Gastrocnemius medialis (tissue), 4 donors: ENCODE measurements at regions of chr6 and their contacts with region 1.

Region 1: GRCh38 chr6:152338335-152339125 is 298.6 kb downstream of the SYNE1 start:
- DNase-seq: peak; percentile 19 to 51
- ATAC-seq: peak; percentile 49 to 57
- H3K4me3 ChIP-seq: no peak overlapping the region
- H3K27ac ChIP-seq: no peak overlapping the region
- H3K4me1 ChIP-seq: peaks cover 8 to 10% of the 10 kb centered on the region in 2 donors
- H3K27me3 ChIP-seq: no peaks in the 10 kb centered on the region
- CTCF ChIP-seq: peak; percentile 49 to 87 (median 77)
- POLR2A ChIP-seq: no peak

Region 2: DNA sequence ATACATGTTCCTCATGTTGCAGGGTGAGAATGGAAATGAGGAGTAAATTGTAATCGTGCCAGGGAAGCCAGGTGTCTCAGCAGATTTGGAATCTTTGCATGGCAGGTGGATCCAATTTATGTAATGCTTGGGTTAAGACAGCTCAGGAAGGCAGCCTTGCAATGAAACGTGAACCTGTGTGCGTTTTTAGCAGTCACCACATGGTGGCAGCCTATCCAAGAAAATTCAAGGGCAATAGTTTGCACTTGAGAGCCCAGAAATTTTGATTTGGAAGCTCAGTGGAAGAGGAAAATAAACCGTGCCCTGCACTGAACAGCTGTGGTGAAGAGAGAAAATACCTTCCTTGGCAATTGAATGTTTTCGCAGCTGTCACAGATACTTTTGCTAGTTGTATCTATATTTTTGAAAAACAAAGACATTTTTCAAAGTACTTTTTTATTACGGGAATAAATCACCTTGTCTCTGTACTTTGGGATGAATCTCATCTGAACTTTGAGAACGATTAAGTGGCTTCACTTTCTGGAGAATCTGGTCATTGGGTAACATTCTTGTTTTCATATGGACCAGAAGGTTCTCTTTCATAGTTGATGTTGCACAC is 1446.5 kb before region 1 on chr6:
- in situ Hi-C with region 1: no loop called
- intact Hi-C with region 1: no loop called
- DNase-seq: peak; percentile 27 to 52
- ATAC-seq: peak; percentile 84 to 89
- H3K4me3 ChIP-seq: no peak overlapping the region
- H3K27ac ChIP-seq: no peak overlapping the region
- H3K4me1 ChIP-seq: peaks cover 7 to 12% of the 10 kb centered on the region in 2 donors
- H3K27me3 ChIP-seq: peaks cover 0 to 4% (median 2%) of the 10 kb centered on the region in 3 donors
- CTCF ChIP-seq: peak; percentile 65 to 86 (median 71)
- POLR2A ChIP-seq: no peak

Region 3: GRCh38 chr6:152206072-152206818 is 132.3 kb before region 1 on chr6:
- in situ Hi-C with region 1: loop called in 1 of 4 experiments (anchors 25 kb)
- intact Hi-C with region 1: no loop called
- DNase-seq: peak in 1 of 2 donors; percentile 25
- ATAC-seq: peak in 1 of 2 donors; percentile 58
- H3K4me3 ChIP-seq: no peak overlapping the region
- H3K27ac ChIP-seq: no peak overlapping the region
- H3K4me1 ChIP-seq: no peaks in the 10 kb centered on the region
- H3K27me3 ChIP-seq: no peaks in the 10 kb centered on the region
- CTCF ChIP-seq: peak in 4 of 5 experiments; percentile 25 to 46 (median 33)
- POLR2A ChIP-seq: no peak